AG04450 (cell line): ENCODE measurements at regions of chr10 and their contacts with region 1.

Region 1: DNA sequence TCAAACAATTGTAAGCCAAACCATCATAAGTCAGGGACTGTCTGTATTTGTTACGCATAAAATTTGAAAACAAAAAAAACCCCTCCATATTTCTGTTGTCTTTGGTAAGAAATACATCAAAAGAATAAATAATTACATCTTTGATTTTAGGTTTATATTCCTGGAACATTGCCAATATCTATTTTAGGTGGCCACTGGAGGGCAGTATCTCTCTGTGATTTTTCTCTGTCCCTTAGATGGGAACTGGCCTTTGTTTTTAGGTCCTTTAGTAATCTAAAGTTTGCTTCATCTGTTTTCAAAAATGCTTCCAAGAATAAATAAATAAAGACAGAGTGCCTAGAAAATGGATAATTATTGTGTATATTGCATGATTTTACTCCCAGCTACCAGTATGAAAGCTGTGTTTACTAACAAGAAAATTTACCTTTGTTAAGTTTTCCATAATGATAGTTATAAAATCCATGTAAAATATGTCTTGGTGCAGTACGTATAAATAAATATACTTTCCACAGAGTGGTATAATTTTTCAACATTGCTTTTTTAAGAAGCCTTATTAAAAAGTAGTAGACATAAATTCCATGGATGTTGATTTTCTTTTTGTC is 64.2 kb downstream of the PHYHIPL start:
- DNase-seq: peak; percentile 21
- H3K4me3 ChIP-seq: no peak overlapping the region
- H3K27ac ChIP-seq: no peak overlapping the region
- H3K27me3 ChIP-seq: no peaks in the 10 kb centered on the region
- CTCF ChIP-seq: peak; percentile 54

Region 2: GRCh38 chr10:58892031-58892531 is 348.6 kb before region 1 on chr10:
- CTCF ChIA-PET with region 1: no interaction called
- POLR2A ChIA-PET with region 1: no interaction called
- DNase-seq: no peak
- H3K4me3 ChIP-seq: no peak overlapping the region
- H3K27ac ChIP-seq: no peak overlapping the region
- H3K27me3 ChIP-seq: no peaks in the 10 kb centered on the region
- CTCF ChIP-seq: no peak

Region 3: DNA sequence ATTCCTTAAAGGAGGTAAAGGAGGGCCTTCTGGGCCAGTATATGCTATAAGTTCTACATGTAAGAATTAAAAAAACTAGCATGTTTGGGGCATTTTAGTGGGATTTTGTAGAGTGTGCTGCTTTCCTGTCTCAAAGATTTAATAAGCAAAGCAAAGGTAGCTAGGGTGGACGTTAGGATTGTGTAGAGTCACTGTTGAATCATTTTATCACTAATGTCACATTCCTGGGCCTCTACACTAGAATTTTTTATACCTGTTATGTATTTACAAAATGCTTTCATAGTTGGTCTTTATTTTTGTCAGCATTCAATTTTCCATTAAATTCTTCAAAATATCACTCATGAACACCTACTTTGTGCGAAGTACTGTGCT is 203.7 kb before region 1 on chr10:
- CTCF ChIA-PET with region 1: no interaction called
- POLR2A ChIA-PET with region 1: no interaction called
- DNase-seq: no peak
- H3K4me3 ChIP-seq: no peak overlapping the region
- H3K27ac ChIP-seq: no peak overlapping the region
- H3K27me3 ChIP-seq: no peaks in the 10 kb centered on the region
- CTCF ChIP-seq: no peak

Region 4: DNA sequence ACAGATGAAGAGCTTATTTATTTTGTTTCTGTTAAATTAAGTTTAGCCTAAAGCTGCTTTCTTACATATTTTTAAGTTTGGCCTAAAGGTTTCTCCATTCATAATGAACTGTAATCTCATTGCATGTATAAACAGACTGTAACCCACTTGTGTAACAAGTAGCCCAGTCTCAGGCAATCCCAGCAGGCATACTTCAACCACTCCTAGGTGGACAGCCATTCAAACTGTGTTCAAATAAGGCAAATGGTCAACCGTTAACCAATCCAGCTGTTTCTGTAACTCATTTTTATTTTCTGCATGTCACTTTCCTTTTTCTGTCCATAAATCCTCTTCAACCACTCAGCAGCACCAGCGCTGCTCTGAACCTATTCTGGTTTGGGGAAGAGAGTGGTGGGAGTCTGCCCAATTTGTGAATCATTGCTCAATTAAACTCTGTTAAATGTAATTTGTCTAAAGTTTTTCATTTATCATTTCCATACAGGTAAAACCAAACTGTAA is 28.3 kb before region 1 on chr10:
- CTCF ChIA-PET with region 1: no interaction called
- POLR2A ChIA-PET with region 1: no interaction called
- DNase-seq: no peak
- H3K4me3 ChIP-seq: no peak overlapping the region
- H3K27ac ChIP-seq: no peak overlapping the region
- H3K27me3 ChIP-seq: no peaks in the 10 kb centered on the region
- CTCF ChIP-seq: no peak

Region 5: GRCh38 chr10:59465088-59465487 is 224.4 kb after region 1 on chr10:
- CTCF ChIA-PET with region 1: interaction called, 14 read pairs
- POLR2A ChIA-PET with region 1: no interaction called
- DNase-seq: peak; percentile 26
- H3K4me3 ChIP-seq: no peak overlapping the region
- H3K27ac ChIP-seq: no peak overlapping the region
- H3K27me3 ChIP-seq: no peaks in the 10 kb centered on the region
- CTCF ChIP-seq: peak; percentile 53

Region 6: GRCh38 chr10:59580026-59580863 is 339.6 kb after region 1 on chr10:
- CTCF ChIA-PET with region 1: interaction called, 41 read pairs
- POLR2A ChIA-PET with region 1: no interaction called
- DNase-seq: peak; percentile 29
- H3K4me3 ChIP-seq: no peak overlapping the region
- H3K27ac ChIP-seq: no peak overlapping the region
- H3K27me3 ChIP-seq: no peaks in the 10 kb centered on the region
- CTCF ChIP-seq: peak; percentile 65